PC-3 (cell line): ENCODE measurements at regions of chr19 and their contacts with region 1.

Region 1: DNA sequence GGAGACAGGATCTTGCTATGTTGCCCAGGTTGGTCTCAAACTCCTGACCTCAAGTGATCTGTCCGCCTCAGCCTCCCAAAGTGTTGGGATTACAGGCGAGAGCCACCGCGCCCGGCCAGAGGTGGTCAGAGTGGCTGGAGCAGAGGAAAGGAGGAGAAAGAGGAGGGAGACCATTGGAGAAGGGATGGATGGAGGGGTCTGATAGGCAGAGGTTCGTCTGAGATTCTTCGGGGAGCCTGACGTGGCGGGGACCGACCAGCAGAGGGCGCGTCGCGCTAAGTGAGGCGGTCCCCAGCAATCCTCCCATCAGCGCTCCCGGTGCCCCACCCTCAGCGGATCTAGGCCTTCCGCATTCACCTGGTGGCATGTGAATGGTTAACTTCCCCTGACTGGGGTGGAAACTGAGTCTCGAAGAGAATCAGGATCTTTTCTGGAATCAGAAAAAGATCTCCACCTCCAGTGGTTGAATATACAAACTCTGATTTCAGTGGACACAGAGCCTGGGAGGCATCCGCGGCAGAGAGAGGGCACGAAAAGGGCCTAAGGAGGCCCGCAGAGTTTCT is 8.8 kb downstream of the GTPBP3 start:
- DNase-seq: peak; percentile 79
- ATAC-seq: peak; percentile 87
- H3K4me3 ChIP-seq: no peak overlapping the region
- H3K27ac ChIP-seq: no peak overlapping the region
- H3K4me1 ChIP-seq: peaks cover 10% of the 10 kb centered on the region; the same call in 1 of the 2 replicates
- H3K27me3 ChIP-seq: no peaks in the 10 kb centered on the region
- CTCF ChIP-seq: peak; percentile 85

Region 2: GRCh38 chr19:17576759-17577473 is 230.7 kb after region 1 on chr19:
- CTCF ChIA-PET with region 1: no interaction called
- POLR2A ChIA-PET with region 1: interaction called, 26 read pairs
- intact Hi-C with region 1: no loop called
- DNase-seq: no peak
- ATAC-seq: no peak; the same call in 1 of the 2 replicates
- H3K4me3 ChIP-seq: no peak overlapping the region
- H3K27ac ChIP-seq: no peak overlapping the region
- H3K4me1 ChIP-seq: no peaks in the 10 kb centered on the region
- H3K27me3 ChIP-seq: no peaks in the 10 kb centered on the region
- CTCF ChIP-seq: no peak